CD8-positive, alpha-beta memory T cell (primary cell): ENCODE measurements at regions of chr9 and their contacts with region 1.

Region 1: DNA sequence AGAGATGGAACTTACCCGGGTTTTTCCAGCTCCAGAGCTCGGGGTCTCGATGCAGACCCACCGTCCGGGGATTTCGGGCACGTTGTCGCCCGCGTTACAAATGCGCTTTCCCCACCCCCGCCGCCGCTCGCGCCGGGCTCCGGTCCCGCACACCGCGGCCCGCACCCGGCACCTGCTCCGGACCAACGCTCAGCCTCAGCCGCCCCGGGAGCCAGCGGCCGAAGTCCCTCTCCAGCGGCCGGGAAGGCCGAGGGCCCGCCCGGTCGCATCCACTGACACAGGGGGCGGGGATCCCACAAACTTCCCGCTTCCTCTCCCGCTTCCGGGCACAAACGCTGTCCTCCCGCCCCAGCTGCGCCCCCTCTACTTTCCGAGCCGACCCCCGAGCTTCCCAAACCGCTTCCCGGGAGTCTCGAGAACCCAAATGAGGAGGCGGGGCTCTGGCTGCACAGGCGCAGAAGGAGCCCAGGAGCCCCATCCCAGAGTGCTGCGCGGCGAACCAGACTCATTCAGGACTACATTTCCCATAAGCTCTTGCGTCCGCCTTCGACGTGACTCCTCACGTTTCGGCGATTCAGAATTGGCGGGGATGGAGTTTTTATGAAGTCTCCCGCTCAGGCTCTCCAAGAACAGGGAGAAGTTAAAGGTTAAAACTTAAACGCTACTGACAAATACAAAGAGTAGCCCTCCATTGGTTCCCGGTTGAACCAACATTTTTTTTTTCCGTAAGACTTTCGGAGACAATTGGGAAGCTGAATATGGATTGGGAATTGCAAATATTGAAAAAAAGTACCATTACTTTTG is at the start of gene ZNF782:
- DNase-seq: peak; percentile 77 to 90 (median 79)
- H3K4me3 ChIP-seq: peak within 1 kb of the TSS; percentile 78
- H3K4me3 Mint-ChIP-seq: peak within 1 kb of the TSS; percentile 93 to 100 (median 100)
- H3K27ac ChIP-seq: peak within 1 kb of the TSS; percentile 60
- H3K27ac Mint-ChIP-seq: peak within 1 kb of the TSS; percentile 72 to 100 (median 99)
- H3K4me1 ChIP-seq: peaks cover 33% of the 10 kb centered on the region
- H3K4me1 Mint-ChIP-seq: peaks cover 43 to 59% (median 55%) of the 10 kb centered on the region in 3 donors
- H3K27me3 ChIP-seq: no peaks in the 10 kb centered on the region
- H3K27me3 Mint-ChIP-seq: peaks cover 2 to 6% of the 10 kb centered on the region in 2 donors
- total RNA-seq, gene ZNF782: 4.2 to 6.5 TPM

Region 2: GRCh38 chr9:96875461-96876364 is 21.4 kb after region 1 on chr9:
- CTCF ChIA-PET with region 1: interaction called, 16 read pairs
- POLR2A ChIA-PET with region 1: interaction called, 5 read pairs
- DNase-seq: peak in 3 of 5 donors; percentile 15 to 52 (median 30)
- H3K4me3 ChIP-seq: peak overlapping the region; percentile 25
- H3K4me3 Mint-ChIP-seq: peak overlapping the region; percentile 80 to 94 (median 85)
- H3K27ac ChIP-seq: no peak overlapping the region
- H3K27ac Mint-ChIP-seq: peak overlapping the region; percentile 15 to 92 (median 86)
- H3K4me1 ChIP-seq: peaks cover 8% of the 10 kb centered on the region
- H3K4me1 Mint-ChIP-seq: peaks cover 23 to 33% (median 30%) of the 10 kb centered on the region in 3 donors
- H3K27me3 ChIP-seq: peaks cover 14% of the 10 kb centered on the region
- H3K27me3 Mint-ChIP-seq: peaks cover 31 to 62% of the 10 kb centered on the region in 2 donors

Region 3: GRCh38 chr9:97128919-97129318 is 274.6 kb after region 1 on chr9:
- CTCF ChIA-PET with region 1: no interaction called
- POLR2A ChIA-PET with region 1: no interaction called
- DNase-seq: no peak
- H3K4me3 ChIP-seq: no peak overlapping the region
- H3K4me3 Mint-ChIP-seq: no peak overlapping the region
- H3K27ac ChIP-seq: no peak overlapping the region
- H3K27ac Mint-ChIP-seq: no peak overlapping the region
- H3K4me1 ChIP-seq: no peaks in the 10 kb centered on the region
- H3K4me1 Mint-ChIP-seq: no peaks in the 10 kb centered on the region
- H3K27me3 ChIP-seq: no peaks in the 10 kb centered on the region
- H3K27me3 Mint-ChIP-seq: no peaks in the 10 kb centered on the region

Region 4: GRCh38 chr9:97398999-97399758 is 544.9 kb after region 1 on chr9:
- CTCF ChIA-PET with region 1: interaction called, 65 read pairs
- POLR2A ChIA-PET with region 1: no interaction called
- DNase-seq: peak; percentile 52 to 72 (median 55)
- H3K4me3 ChIP-seq: no peak overlapping the region
- H3K4me3 Mint-ChIP-seq: no peak overlapping the region
- H3K27ac ChIP-seq: no peak overlapping the region
- H3K27ac Mint-ChIP-seq: peak overlapping the region in 1 of 8 donors; percentile 69
- H3K4me1 ChIP-seq: no peaks in the 10 kb centered on the region
- H3K4me1 Mint-ChIP-seq: no peaks in the 10 kb centered on the region
- H3K27me3 ChIP-seq: no peaks in the 10 kb centered on the region
- H3K27me3 Mint-ChIP-seq: peaks cover 5 to 6% of the 10 kb centered on the region in 2 donors